CD8-positive, alpha-beta T cell (primary cell): ENCODE measurements at regions of chr12 and their contacts with region 1.

Region 1: DNA sequence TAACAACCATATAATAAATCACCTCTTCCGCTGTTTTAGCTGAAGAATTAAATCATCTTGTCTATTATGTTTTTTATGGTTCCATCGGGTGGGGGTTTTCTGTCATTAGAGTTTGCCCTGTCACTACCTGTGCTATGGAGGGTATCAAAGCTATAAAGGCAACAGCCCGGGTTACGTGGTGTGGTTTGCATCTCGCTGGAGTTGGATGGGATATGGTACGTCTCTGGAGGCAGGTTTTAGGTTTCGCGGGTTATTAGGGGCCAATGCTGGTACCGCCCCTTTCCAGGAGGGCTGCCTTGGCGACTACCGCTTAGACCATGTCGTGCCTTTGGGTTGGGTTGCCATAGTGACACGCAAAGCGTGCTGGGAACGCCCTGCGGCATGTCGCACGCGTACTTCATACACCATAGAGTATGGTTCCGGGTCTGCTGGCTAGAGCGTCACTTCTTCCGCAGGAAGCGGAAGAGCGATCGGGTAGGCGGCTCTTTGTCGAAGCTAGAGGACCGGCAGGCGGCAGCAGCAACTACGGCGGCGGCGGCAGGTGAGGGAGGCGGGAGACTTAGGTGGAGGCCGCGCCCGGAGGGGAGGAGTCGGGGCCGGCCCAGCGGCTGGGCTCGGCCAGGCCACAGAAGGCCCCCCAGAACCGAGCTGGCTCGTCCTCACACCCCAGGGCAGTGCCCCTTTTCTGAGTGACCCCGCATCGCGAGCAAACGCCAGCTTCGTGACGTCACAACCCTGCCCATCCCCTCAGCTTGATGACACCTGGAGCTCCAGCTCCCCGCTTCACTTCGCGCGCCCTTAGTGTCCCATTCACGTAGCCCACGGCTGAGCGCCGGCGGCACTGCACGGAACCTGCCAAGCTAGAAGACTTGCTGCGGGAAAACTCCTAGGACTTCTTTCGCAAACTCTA is at the start of gene ZC3H10:
- DNase-seq: peak; percentile 91 to 100 (median 96)
- ATAC-seq: peak; percentile 70
- H3K4me3 ChIP-seq: peak within 1 kb of the TSS; percentile 77 to 86
- H3K4me3 Mint-ChIP-seq: peak within 1 kb of the TSS; percentile 98
- H3K27ac ChIP-seq: peak within 1 kb of the TSS; percentile 87 to 95
- H3K27ac Mint-ChIP-seq: peak within 1 kb of the TSS; percentile 99
- H3K4me1 ChIP-seq: peaks cover 30% of the 10 kb centered on the region
- H3K4me1 Mint-ChIP-seq: peaks cover 38% of the 10 kb centered on the region
- H3K27me3 ChIP-seq: no peaks in the 10 kb centered on the region
- H3K27me3 Mint-ChIP-seq: no peaks in the 10 kb centered on the region
- CTCF ChIP-seq: peak; percentile 33
- total RNA-seq, gene ZC3H10: 9.0 TPM

Region 2: DNA sequence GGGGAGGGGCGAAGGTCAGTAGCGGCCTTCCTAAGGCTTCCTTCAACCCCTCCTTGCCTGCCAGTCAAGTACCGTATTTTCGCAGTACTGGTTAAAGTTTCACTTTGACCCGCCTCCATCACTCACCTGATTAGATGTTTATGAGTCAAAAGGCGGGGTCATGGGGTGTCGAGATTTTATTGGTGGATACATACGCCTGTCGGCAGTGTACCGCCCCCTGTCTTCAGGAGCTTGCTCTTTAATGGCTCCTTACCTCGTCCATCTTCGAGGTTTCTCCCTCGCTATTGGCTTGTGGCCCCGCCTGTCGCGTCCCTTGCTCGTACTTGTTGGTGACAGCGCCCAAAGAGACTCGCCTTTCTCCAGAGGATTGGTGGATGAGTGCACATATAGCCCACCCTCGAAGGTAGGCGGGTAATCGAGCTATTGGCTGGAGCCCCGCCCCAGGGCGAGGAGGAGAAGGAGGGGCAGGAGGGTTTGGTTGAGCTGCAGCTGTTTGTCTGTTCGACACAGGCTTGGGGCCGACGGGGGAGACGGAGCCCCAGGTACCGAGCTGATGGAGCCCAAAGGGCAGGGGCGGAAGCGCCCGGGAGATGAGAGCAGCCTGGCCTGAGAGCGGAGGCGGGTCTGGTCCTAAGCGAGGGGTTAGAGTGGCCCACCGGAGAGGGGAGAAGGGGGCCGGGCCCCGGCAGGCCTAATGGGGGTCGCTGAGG is 144.3 kb before region 1 on chr12 and contains the start of gene RAB5B:
- CTCF ChIA-PET with region 1: no interaction called
- POLR2A ChIA-PET with region 1: interaction called, 17 read pairs
- intact Hi-C with region 1: loop called in 1 of 2 experiments (anchors 1 kb)
- DNase-seq: peak; percentile 94 to 100 (median 97)
- ATAC-seq: peak; percentile 87
- H3K4me3 ChIP-seq: peak within 1 kb of the TSS; percentile 81 to 84
- H3K4me3 Mint-ChIP-seq: no peak within 1 kb of the TSS
- H3K27ac ChIP-seq: peak within 1 kb of the TSS; percentile 76 to 90
- H3K27ac Mint-ChIP-seq: no peak within 1 kb of the TSS
- H3K4me1 ChIP-seq: peaks cover 18% of the 10 kb centered on the region
- H3K4me1 Mint-ChIP-seq: peaks cover 27% of the 10 kb centered on the region
- H3K27me3 ChIP-seq: no peaks in the 10 kb centered on the region
- H3K27me3 Mint-ChIP-seq: no peaks in the 10 kb centered on the region
- CTCF ChIP-seq: no peak
- total RNA-seq, gene RAB5B: 16.1 to 16.8 TPM

Region 3: DNA sequence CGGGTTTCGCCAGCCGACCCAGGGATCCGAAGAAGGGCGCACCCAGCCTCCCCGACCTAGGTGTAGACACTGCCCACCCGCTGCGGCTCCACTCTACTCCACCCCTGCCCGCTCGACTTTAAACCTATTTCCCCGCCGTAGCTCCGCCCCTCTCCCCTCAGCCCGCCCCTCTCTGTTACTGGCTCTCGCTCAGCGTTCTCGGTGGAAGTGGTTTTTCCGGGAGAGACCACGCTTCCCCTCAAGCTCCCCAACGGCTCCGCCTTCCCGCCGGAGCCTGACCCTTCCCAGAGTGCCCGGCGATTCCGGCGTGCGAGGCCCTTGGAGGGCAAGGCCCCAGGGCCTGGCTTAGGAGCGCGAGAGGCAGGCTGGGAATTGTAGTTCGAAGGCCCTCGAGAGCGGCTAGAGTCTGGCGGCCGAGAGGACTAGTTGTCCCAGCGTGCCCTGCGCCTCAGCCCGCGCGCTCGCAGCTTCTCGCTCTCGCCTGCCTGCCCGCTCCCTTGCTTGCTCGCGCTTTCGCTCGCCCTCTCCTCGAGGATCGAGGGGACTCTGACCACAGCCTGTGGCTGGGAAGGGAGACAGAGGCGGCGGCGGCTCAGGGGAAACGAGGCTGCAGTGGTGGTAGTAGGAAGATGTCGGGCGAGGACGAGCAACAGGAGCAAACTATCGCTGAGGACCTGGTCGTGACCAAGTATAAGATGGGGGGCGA is 13.8 kb before region 1 on chr12 and contains the start of gene PA2G4:
- CTCF ChIA-PET with region 1: interaction called, 45 read pairs
- POLR2A ChIA-PET with region 1: interaction called, 135 read pairs
- intact Hi-C with region 1: loop called (anchors 1 kb)
- DNase-seq: peak; percentile 91 to 99 (median 96)
- ATAC-seq: peak; percentile 88
- H3K4me3 ChIP-seq: peak within 1 kb of the TSS; percentile 90
- H3K4me3 Mint-ChIP-seq: peak within 1 kb of the TSS; percentile 99
- H3K27ac ChIP-seq: peak within 1 kb of the TSS; percentile 53 to 70
- H3K27ac Mint-ChIP-seq: peak within 1 kb of the TSS; percentile 98
- H3K4me1 ChIP-seq: peaks cover 37% of the 10 kb centered on the region
- H3K4me1 Mint-ChIP-seq: peaks cover 66% of the 10 kb centered on the region
- H3K27me3 ChIP-seq: no peaks in the 10 kb centered on the region
- H3K27me3 Mint-ChIP-seq: no peaks in the 10 kb centered on the region
- CTCF ChIP-seq: no peak
- total RNA-seq, gene PA2G4: 61.6 to 62.4 TPM

Region 4: DNA sequence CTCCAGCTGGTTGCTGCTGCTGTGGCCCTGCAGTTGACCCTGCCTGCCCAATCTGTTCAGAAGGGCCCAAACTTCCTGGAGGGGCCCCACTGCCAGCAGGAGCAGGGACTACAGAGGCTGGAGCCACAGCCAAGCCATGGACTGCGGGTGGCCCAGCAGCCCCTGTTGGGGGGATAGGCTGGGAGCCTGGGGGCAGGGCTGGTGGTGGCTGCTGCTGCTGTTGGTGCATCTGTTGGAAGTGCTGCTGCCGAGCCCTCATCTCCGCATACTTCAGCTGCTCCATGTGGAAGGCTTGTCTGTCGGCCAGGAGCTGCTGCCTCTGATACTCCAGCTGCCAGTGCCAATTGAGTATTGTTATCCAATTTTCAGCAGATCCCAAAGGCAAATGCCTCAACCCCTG is 47.3 kb after region 1 on chr12:
- CTCF ChIA-PET with region 1: interaction called, 12 read pairs
- POLR2A ChIA-PET with region 1: interaction called, 11 read pairs
- intact Hi-C with region 1: no loop called
- DNase-seq: no peak
- ATAC-seq: no peak
- H3K4me3 ChIP-seq: no peak overlapping the region
- H3K4me3 Mint-ChIP-seq: no peak overlapping the region
- H3K27ac ChIP-seq: peak overlapping the region in 1 of 2 experiments; percentile 19
- H3K27ac Mint-ChIP-seq: no peak overlapping the region
- H3K4me1 ChIP-seq: peaks cover 15% of the 10 kb centered on the region
- H3K4me1 Mint-ChIP-seq: peaks cover 15% of the 10 kb centered on the region
- H3K27me3 ChIP-seq: no peaks in the 10 kb centered on the region
- H3K27me3 Mint-ChIP-seq: no peaks in the 10 kb centered on the region
- CTCF ChIP-seq: no peak

Region 5: GRCh38 chr12:56266693-56267442 is 148.8 kb after region 1 on chr12 and contains the start of gene COQ10A:
- CTCF ChIA-PET with region 1: interaction called, 11 read pairs
- POLR2A ChIA-PET with region 1: interaction called, 3 read pairs
- intact Hi-C with region 1: loop called in 1 of 2 experiments (anchors 2 kb)
- DNase-seq: peak; percentile 77 to 95 (median 92)
- ATAC-seq: peak; percentile 87
- H3K4me3 ChIP-seq: peak within 1 kb of the TSS; percentile 87 to 89
- H3K4me3 Mint-ChIP-seq: peak within 1 kb of the TSS; percentile 92
- H3K27ac ChIP-seq: peak within 1 kb of the TSS; percentile 95 to 98
- H3K27ac Mint-ChIP-seq: peak within 1 kb of the TSS; percentile 92
- H3K4me1 ChIP-seq: peaks cover 12% of the 10 kb centered on the region
- H3K4me1 Mint-ChIP-seq: peaks cover 20% of the 10 kb centered on the region
- H3K27me3 ChIP-seq: no peaks in the 10 kb centered on the region
- H3K27me3 Mint-ChIP-seq: no peaks in the 10 kb centered on the region
- CTCF ChIP-seq: peak; percentile 66
- total RNA-seq, gene COQ10A: 29.5 to 38.8 TPM

Region 6: GRCh38 chr12:56448860-56449621 is 331.0 kb after region 1 on chr12 and contains the start of gene TIMELESS:
- CTCF ChIA-PET with region 1: no interaction called
- POLR2A ChIA-PET with region 1: no interaction called
- intact Hi-C with region 1: loop called in 1 of 2 experiments (anchors 1 kb)
- DNase-seq: peak; percentile 63 to 93 (median 83)
- ATAC-seq: peak; percentile 95
- H3K4me3 ChIP-seq: peak within 1 kb of the TSS; percentile 84 to 94
- H3K4me3 Mint-ChIP-seq: peak within 1 kb of the TSS; percentile 91
- H3K27ac ChIP-seq: peak within 1 kb of the TSS; percentile 34 to 68
- H3K27ac Mint-ChIP-seq: peak within 1 kb of the TSS; percentile 86
- H3K4me1 ChIP-seq: peaks cover 7% of the 10 kb centered on the region
- H3K4me1 Mint-ChIP-seq: peaks cover 14% of the 10 kb centered on the region
- H3K27me3 ChIP-seq: no peaks in the 10 kb centered on the region
- H3K27me3 Mint-ChIP-seq: no peaks in the 10 kb centered on the region
- CTCF ChIP-seq: no peak
- total RNA-seq, gene TIMELESS: 1.7 to 2.2 TPM